Activated T-helper 2 cell treated with anti-CD3 and anti-CD28 coated beads, Interferon-gamma antibody, Interleukin-2, Interleukin-4, amounts not matched to agents 10 μg/mL and 5 μg/mL and 100 μg/mL, durations not matched to agents 14 hours and 24 hours and 36 hours (primary cell): ENCODE measurements at regions of chr5 and their contacts with region 1.

Region 1: DNA sequence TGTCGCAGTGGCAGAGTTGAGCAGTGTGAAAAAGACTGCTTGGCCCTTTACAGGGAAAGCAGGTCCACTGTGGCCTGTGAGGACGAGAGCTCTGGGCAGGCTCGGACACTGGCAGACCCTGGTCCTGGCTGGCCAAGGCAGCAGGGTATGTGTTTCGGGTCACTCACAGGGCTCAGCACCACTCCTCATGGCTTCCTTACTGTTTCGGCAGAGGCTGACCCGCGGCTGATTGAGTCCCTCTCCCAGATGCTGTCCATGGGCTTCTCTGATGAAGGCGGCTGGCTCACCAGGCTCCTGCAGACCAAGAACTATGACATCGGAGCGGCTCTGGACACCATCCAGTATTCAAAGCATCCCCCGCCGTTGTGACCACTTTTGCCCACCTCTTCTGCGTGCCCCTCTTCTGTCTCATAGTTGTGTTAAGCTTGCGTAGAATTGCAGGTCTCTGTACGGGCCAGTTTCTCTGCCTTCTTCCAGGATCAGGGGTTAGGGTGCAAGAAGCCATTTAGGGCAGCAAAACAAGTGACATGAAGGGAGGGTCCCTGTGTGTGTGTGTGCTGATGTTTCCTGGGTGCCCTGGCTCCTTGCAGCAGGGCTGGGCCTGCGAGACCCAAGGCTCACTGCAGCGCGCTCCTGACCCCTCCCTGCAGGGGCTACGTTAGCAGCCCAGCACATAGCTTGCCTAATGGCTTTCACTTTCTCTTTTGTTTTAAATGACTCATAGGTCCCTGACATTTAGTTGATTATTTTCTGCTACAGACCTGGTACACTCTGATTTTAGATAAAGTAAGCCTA is 15.7 kb downstream of the SQSTM1 start:
- DNase-seq: peak; percentile 64
- H3K4me3 Mint-ChIP-seq: peak overlapping the region; percentile 22
- H3K27ac Mint-ChIP-seq: peak overlapping the region; percentile 89
- H3K4me1 Mint-ChIP-seq: peaks cover 15% of the 10 kb centered on the region
- H3K27me3 Mint-ChIP-seq: no peaks in the 10 kb centered on the region

Region 2: DNA sequence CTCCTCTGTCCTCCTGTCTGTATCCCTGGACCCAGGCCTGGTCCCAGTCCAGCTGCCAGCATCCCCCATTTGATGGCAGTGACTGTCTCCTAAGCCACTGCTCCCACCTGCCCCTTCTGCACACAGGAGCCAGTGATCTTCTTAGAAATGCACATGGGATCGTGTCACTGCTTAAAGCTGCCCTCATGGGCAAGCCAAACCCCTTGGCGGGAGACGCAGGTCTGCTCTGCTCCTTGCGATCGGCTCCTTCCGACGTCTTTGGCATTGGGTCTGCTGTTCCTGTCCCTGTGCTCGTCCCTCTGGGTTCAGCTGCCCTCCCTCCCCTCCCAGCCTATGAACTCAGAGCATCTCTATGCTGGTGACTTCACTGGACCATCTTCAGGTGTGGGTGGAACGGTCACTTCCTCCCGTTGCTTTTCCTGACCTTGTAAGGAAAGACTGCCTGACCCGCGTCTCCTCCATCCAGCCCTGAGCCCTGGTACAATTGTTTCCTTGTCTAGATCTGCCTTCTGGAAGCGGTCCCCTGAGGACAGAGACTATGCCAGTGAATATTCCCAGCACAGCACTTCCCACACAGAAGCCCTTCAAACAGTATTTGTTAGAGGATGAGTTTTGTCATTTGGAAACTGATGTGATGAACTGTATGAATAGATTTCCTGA is 659.7 kb before region 1 on chr5:
- intact Hi-C with region 1: no loop called
- DNase-seq: no peak
- H3K4me3 Mint-ChIP-seq: no peak overlapping the region
- H3K27ac Mint-ChIP-seq: no peak overlapping the region
- H3K4me1 Mint-ChIP-seq: no peaks in the 10 kb centered on the region
- H3K27me3 Mint-ChIP-seq: no peaks in the 10 kb centered on the region

Region 3: DNA sequence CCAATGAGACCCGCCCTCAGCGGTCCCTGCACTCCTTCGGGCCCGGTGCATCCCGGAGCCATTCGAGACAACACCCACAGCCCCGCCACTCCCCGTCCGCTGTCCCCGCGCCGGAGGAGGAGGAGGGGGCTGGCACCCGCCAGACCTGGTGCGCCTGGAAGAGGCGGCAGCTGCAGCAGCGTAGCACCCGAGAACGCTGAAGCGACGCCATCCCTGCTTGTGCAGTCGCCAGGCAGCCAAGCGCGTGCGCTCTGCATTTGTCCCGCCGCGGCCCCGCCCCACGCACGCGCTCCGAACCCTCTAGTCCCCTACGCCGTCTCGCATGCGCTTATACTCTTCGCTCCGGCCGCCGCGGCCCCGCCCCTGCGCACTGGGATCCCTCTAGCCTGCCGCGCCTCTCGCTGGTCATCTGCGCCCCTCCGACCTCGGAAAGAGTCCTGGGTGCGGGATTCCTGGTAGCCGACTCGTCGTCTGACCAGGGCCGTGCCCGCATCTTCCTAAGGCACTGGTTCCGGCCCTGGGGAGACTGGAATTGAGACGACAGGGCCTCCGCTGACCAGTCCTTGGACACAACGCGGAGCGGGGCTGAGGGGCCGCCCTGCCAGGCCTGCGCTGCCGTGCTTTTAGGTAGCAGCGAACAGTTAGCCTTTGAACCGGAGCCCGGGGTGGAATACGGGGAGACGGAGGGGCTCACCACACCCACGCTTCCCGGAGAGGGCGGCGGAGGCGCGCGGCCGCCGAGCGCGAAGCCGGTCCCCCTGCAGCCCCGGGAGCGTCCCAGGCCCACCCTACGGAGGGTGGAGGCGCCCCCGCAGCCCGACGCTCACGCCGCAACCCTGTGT is 22.4 kb after region 1 on chr5 and contains the start of gene MRNIP:
- intact Hi-C with region 1: loop called (anchors 1 kb)
- DNase-seq: peak; percentile 86
- H3K4me3 Mint-ChIP-seq: peak within 1 kb of the TSS; percentile 96
- H3K27ac Mint-ChIP-seq: peak within 1 kb of the TSS; percentile 74
- H3K4me1 Mint-ChIP-seq: peaks cover 9% of the 10 kb centered on the region
- H3K27me3 Mint-ChIP-seq: no peaks in the 10 kb centered on the region
- total RNA-seq, gene MRNIP: 24.4 and 30.1 TPM in 2 replicates

Region 4: DNA sequence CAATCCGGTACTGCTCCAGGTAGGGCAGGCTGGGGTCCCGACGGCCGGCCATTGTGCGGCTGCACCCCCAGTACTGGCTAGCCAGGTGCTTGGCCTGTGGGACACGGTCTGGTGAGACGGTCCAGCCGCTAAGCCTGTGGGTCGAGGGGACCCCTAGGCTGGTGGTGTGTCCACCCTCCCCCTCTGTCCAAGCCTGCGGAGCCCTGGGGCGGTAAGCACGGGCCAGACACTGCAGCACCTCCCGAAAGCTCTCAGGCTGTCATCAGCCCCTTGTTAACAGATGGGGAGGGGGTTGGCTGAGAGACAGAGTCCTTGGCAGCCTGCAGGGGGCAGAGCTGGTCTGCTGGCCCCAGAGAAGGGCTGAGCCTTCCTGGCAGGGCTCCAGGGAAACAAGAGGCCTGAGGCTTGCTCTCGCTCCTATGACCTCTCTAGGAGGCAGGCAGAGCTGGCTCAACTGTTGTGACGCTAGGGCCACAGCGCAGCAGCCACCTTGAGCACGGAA is 34.0 kb after region 1 on chr5:
- intact Hi-C with region 1: no loop called
- DNase-seq: no peak
- H3K4me3 Mint-ChIP-seq: no peak overlapping the region
- H3K27ac Mint-ChIP-seq: no peak overlapping the region
- H3K4me1 Mint-ChIP-seq: peaks cover 2% of the 10 kb centered on the region
- H3K27me3 Mint-ChIP-seq: no peaks in the 10 kb centered on the region